ENCODE measurements at regions of chr22 and their contacts with region 1.

Region 1: DNA sequence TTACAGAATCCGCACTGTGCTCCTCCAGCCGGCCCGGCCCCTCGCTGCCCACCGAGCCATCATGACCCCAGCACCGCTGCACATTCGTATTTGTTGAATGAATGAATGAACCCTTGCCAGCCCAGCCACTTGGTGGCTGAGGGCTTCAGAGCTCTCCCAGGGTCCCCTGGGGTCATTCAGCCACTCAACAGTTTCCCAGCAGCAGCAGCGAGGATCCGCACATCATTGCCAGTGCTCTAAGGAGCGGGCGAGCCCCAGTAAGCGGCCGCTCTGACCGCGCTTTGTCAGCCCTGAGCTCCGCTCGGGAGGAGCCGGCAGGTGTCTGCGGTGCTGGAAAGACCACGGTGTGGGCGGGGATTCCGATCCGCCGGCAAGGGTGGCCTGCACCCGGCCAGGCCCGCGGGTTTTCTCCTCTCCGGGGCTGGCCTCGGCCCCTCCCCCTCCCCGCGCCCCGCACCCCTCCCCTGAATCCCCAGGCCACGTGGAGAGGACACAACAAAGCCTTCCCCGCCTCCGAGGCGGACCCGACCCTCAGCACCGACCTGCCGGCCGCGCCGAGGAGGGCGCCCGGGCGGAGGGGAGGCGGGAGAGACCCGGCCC is 563 bp downstream of the BID start:
- DNase-seq: peak; percentile 73
- ATAC-seq: peak; percentile 78
- H3K4me3 Mint-ChIP-seq: peak overlapping the region; percentile 70
- H3K27ac Mint-ChIP-seq: no peak overlapping the region
- H3K4me1 Mint-ChIP-seq: peaks cover 20% of the 10 kb centered on the region
- H3K27me3 Mint-ChIP-seq: peaks cover 5% of the 10 kb centered on the region; the same call in 1 of the 2 replicates
- CTCF ChIP-seq: no peak

Region 2: GRCh38 chr22:17754233-17754925 is 19.3 kb before region 1 on chr22:
- CTCF ChIA-PET with region 1: interaction called, 12 read pairs
- POLR2A ChIA-PET with region 1: no interaction called
- DNase-seq: peak; percentile 59
- ATAC-seq: peak; percentile 81
- H3K4me3 Mint-ChIP-seq: no peak overlapping the region
- H3K27ac Mint-ChIP-seq: no peak overlapping the region
- H3K4me1 Mint-ChIP-seq: no peaks in the 10 kb centered on the region
- H3K27me3 Mint-ChIP-seq: no peaks in the 10 kb centered on the region
- CTCF ChIP-seq: peak; percentile 37; the same call in 1 of the 2 replicates

Region 3: DNA sequence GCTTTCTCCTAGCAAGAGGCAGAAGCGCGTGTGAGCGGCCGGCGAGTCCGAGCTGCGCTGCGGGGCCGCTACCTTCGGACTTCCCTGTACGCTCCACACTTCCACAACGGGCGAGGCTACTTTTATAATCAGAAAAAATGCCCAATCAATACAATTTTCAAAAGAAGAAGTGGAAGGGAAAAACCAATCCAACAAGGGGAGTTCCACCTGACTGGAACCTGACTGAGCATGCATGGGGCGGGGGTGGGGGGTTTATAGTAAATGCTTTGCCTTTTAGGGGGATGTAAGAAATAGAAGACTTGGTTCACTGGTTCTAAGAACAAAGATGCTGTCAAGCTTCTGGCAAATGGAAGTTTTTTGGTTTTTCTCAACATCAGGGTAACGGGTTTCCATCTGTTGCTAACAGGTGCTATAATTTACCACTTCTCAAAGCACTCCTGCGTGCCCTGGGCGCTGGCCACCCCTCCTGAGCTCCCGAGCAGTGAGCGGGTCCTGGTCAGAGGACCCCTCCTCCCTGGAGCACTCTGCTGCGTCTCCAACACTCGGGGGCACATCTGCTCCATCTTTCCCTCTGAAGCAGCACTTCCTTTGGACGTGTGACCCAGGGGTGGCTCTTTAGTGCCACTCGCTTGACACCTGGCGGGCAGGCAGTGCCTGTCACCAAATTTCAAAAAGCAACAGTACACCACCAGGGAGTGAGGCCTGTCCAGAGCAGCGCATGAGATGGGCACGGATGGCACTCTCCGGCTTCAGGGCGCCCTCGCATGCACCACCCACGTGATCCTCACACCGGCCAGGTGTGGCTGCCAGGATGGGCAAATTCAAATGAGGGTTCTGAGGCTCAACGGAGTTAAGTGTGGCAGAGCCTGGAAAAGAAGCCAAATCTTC is 22.2 kb after region 1 on chr22:
- CTCF ChIA-PET with region 1: no interaction called
- POLR2A ChIA-PET with region 1: no interaction called
- DNase-seq: no peak
- ATAC-seq: no peak
- H3K4me3 Mint-ChIP-seq: no peak overlapping the region
- H3K27ac Mint-ChIP-seq: no peak overlapping the region
- H3K4me1 Mint-ChIP-seq: no peaks in the 10 kb centered on the region
- H3K27me3 Mint-ChIP-seq: no peaks in the 10 kb centered on the region
- CTCF ChIP-seq: no peak

Measured in WTC11 (cell line).